GM10248 (cell line): ENCODE measurements at regions of chr10 and their contacts with region 1.

Region 1: DNA sequence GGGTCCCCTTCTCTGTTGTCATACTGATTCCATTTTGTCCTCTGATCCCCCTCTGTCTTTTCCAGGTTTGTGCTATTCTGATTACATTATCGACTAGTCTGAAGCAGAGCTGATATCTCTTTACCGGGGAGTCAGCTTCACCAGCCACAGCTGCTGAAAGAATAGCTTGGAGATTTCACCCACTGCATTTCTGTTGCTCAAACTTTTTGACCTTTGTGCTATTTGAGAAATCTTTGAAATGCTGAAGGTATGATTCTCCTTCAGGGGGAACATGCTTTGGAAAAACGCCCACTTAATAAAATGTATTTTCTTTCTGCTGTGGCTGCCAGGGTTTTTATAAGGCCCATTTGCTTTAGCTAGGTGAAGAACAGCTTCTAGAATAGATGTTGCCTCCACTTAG is 197.8 kb upstream of the TCF7L2 start:
- DNase-seq: no peak
- CTCF ChIP-seq: no peak

Region 2: DNA sequence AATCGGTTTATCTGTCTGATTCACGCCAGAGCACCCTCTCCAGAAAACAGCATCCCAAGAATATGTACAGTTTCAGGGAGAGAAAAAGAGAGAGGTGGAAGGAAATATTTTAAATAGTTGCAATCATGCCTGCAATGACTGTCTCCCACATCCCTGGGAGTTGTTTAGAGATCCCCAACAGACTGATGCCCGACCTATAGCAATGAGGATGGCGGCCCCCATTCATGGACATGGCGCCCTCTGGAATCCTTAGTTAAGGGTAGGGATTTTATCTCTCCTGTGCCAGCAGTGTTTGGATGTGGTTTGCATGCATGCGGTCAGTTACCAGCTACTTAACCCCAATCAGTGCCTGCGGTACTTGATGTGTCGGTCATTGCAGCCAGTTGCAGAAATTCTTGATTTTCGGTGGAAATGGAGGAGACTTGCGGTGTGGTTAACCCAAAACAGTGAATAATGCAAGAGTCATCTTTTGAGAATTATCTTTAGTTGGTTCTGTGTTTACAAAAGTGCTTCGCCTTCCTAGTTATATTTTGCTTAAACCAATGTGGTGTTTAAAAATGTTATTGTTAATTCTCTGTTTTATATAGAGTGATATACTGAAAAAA is 11.7 kb after region 1 on chr10:
- CTCF ChIA-PET with region 1: interaction called, 16 read pairs
- POLR2A ChIA-PET with region 1: no interaction called
- DNase-seq: no peak
- CTCF ChIP-seq: no peak